ENCODE measurements at regions of chr9 and their contacts with region 1.

Region 1: GRCh38 chr9:126490871-126491567 is 122.7 kb upstream of the LMX1B start:
- H3K4me3 ChIP-seq: no peak overlapping the region
- H3K27ac ChIP-seq: no peak overlapping the region
- H3K4me1 ChIP-seq: no peaks in the 10 kb centered on the region
- CTCF ChIP-seq: no peak

Region 2: DNA sequence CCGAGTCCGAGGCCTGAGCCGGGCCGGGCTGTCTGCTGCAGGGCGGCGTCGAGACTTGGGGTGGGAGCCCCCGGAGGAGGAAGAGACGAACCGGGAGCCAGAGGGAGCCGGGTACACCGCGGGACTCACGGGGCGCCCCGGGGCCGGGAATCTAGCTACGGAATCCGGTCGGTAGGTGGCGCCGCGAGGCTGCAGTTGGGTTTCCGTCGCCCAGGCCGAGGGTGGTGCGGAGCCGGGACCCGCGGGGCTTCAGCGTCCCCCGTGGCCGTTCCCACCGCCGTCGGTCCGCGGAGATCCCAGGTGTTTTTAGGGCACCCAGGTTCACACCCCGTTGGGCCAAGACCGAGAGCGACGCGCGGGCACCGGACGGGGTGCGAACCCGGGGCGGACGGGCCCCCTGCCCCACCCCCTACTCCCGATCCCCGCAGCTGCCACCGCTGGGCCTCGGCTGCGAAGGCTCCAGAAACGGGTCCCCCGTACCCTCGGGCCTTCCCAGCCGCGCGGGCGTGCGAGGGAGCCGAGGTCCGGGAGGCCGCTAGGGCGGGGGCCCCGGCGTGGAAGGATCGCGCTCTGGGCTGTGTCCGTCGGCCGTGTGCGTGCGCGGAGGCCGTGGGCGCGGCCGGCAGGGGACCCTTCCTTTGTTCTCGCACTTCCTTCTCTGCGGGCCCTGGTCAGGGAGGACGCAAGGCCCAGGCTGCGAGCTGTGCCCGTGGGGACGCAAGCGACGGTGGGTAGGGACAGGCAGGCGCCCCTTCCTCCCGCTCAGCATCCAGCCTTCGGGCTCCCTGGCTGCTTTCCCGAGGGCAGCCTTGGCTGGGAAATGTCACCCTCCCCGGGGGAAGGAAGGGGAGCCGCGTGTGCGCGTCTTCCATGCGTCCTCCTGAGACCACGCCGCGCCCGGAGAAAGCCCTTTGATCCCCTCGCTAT is 1082.8 kb before region 1 on chr9:
- CTCF ChIA-PET with region 1: interaction called, 22 read pairs
- POLR2A ChIA-PET with region 1: no interaction called
- H3K4me3 ChIP-seq: peak overlapping the region; percentile 56
- H3K27ac ChIP-seq: peak overlapping the region; percentile 50; the same call in 1 of the 2 replicates
- H3K4me1 ChIP-seq: no peaks in the 10 kb centered on the region
- CTCF ChIP-seq: peak; percentile 90

Region 3: DNA sequence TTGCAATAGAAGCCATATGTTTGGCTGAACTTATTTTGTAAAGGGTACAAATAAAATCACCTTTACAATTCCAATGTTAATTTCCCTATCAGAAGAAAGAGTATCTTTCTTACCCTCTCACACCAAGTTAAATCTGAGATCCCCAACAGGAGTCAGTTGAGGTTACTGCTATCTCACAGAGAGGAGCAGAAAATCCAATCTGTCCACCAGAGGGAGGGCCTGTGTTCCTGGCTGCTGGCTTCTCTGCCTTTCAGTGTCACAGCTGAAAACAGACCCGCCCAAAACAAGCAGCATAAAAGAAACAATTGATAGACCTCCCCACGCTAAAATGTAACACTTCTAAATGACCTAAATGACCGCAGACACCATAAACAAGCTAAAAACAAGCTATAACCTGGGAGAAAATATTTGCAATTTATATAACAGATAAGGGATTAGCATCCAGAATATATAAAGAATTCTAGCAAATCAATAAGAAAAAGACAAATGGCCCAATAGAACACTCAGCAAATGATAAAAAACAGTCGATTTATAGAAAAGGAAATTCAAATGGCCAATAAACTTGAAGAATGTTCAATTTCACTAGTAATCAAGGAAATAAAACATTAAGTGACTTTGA is 188.9 kb before region 1 on chr9:
- CTCF ChIA-PET with region 1: interaction called, 24 read pairs
- POLR2A ChIA-PET with region 1: no interaction called
- H3K4me3 ChIP-seq: no peak overlapping the region
- H3K27ac ChIP-seq: no peak overlapping the region
- H3K4me1 ChIP-seq: no peaks in the 10 kb centered on the region
- CTCF ChIP-seq: peak; percentile 43; the same call in 1 of the 2 replicates

Region 4: GRCh38 chr9:126317513-126317912 is 173.5 kb before region 1 on chr9:
- CTCF ChIA-PET with region 1: interaction called, 11 read pairs
- POLR2A ChIA-PET with region 1: no interaction called
- H3K4me3 ChIP-seq: no peak overlapping the region
- H3K27ac ChIP-seq: no peak overlapping the region
- H3K4me1 ChIP-seq: no peaks in the 10 kb centered on the region
- CTCF ChIP-seq: no peak

Region 5: DNA sequence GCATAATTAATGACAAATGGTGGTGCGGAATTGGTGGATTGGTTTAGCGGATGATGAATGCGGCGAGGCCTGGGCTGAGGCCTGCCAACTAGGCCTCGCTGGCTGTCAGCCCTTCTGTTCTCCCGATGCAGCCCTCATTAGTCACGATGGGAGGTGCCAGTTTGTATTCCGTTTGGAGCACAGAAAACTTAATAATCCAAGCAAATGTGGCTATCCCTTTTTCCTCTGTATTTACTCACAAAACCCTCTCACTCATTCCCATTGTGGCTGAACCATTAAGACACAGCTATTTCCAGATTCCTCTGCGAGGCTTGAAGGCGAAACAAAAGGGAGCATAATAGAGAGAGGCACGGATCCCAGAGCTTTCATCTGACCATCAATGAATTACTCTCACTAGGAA is 50.1 kb before region 1 on chr9:
- CTCF ChIA-PET with region 1: interaction called, 13 read pairs
- POLR2A ChIA-PET with region 1: no interaction called
- H3K4me3 ChIP-seq: no peak overlapping the region
- H3K27ac ChIP-seq: no peak overlapping the region
- H3K4me1 ChIP-seq: no peaks in the 10 kb centered on the region
- CTCF ChIP-seq: no peak

Measured in HEK293 (cell line).